Heart right ventricle (tissue), 16 donors: ENCODE measurements at regions of chr2 and their contacts with region 1.

Region 1: GRCh38 chr2:133139847-133140533 is 428.3 kb downstream of the NCKAP5 start:
- DNase-seq: no peak
- ATAC-seq: no peak
- H3K4me3 ChIP-seq: no peak overlapping the region
- H3K27ac ChIP-seq: no peak overlapping the region
- H3K4me1 ChIP-seq: no peaks in the 10 kb centered on the region
- H3K27me3 ChIP-seq: no peaks in the 10 kb centered on the region
- CTCF ChIP-seq: no peak

Region 2: DNA sequence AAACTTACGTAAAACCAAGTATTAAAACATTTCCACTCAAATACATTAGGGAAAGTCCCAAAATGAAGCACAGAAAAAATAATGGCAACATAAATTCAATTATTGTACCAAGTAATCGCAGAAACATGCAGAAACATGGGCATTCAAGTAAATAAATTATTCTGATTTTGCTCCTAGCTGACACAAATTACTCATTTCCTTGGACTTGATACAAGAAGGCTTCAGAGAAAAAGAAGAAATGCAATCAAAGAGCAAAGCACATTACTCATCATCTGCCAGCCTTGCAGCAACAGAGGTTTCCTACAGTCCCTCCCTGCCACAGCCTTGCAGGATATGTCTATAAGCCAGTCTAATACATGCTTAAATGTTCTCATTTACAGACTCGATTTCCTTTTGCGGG is 30.2 kb before region 1 on chr2:
- intact Hi-C with region 1: loop called in 1 of 10 experiments (anchors 1 kb)
- DNase-seq: no peak
- ATAC-seq: no peak
- H3K4me3 ChIP-seq: no peak overlapping the region
- H3K27ac ChIP-seq: no peak overlapping the region
- H3K4me1 ChIP-seq: peaks cover 0 to 14% (median 0%) of the 10 kb centered on the region in 9 donors
- H3K27me3 ChIP-seq: no peaks in the 10 kb centered on the region
- CTCF ChIP-seq: no peak